MCF 10A (cell line): ENCODE measurements at regions of chr13 and their contacts with region 1.

Region 1: DNA sequence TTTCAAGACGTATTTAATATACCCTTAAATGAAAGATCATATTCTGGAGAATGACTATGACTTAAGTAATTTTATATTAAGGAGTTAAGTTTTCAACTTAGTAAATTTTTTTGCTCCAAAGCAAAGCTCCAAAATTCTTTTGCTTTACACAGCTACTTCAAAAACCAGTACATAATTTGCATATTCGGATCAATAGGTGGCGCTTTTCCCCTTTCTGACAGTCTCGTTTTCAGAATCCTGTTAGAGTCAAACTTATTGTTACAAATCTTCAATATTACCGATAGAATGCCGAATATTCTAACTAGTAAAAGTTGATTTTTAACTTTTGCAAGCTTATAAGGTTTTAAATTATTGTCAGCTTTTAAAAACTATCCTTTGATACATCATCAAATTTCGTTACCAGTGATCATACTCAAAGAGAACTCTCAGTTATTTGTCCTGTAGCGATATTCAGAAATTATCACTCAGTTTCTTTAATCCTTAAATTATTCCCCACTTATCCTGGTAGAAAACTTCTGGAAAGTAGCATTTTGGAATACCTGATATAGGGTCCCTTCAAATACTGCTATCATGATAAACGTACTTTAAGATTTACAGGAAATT is 852.7 kb upstream of the KLHL1 start:
- DNase-seq: peak; percentile 47
- H3K4me3 Mint-ChIP-seq: no peak overlapping the region
- H3K27ac Mint-ChIP-seq: no peak overlapping the region
- H3K4me1 Mint-ChIP-seq: no peaks in the 10 kb centered on the region
- H3K27me3 Mint-ChIP-seq: peaks cover 69% of the 10 kb centered on the region
- CTCF ChIP-seq: peak; percentile 56

Region 2: GRCh38 chr13:70623239-70623638 is 337.7 kb before region 1 on chr13:
- CTCF ChIA-PET with region 1: no interaction called
- POLR2A ChIA-PET with region 1: no interaction called
- intact Hi-C with region 1: loop called (anchors 1 kb)
- DNase-seq: peak; percentile 11
- H3K4me3 Mint-ChIP-seq: no peak overlapping the region
- H3K27ac Mint-ChIP-seq: no peak overlapping the region
- H3K4me1 Mint-ChIP-seq: no peaks in the 10 kb centered on the region
- H3K27me3 Mint-ChIP-seq: peaks cover 37% of the 10 kb centered on the region
- CTCF ChIP-seq: peak; percentile 39

Region 3: DNA sequence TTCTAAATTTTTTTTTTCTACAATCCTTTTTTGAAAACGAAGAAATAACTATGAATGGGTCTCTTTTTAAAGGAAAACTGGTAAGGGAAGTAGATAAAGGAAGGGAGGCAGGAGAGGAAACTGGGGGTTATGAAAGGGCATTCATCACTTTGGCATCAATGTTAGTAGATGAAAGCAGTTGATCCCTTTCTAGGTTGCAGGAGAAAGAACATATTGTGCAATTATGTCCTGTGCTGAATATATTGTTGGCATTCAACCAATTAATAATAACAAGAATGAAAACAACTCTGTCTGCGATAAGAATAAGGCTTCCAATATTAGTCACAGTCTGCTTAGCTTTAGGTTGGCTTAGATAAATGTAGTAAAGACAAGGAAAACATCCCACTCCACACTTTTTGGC is 55.9 kb before region 1 on chr13:
- CTCF ChIA-PET with region 1: no interaction called
- POLR2A ChIA-PET with region 1: no interaction called
- intact Hi-C with region 1: no loop called
- DNase-seq: no peak
- H3K4me3 Mint-ChIP-seq: no peak overlapping the region
- H3K27ac Mint-ChIP-seq: no peak overlapping the region
- H3K4me1 Mint-ChIP-seq: no peaks in the 10 kb centered on the region
- H3K27me3 Mint-ChIP-seq: peaks cover 52% of the 10 kb centered on the region
- CTCF ChIP-seq: no peak

Region 4: DNA sequence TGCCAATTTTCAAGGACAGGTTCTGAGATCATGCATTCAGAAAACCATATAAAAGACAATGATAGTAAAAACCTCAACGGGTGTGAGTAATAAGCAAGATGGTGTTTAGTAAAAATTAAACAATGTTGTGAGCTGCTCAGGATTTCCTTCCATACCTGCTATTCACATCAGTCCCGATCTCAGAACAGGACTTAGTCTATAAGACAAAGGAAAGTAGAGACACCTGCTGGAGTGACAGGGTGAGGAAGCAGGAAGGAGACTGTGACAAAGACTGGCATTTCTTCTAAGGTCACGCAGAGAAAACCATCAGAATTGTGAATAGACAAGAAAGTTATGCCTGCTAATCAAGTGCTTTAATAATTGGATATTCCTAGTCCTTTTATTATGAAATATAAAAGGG is 258.0 kb after region 1 on chr13:
- CTCF ChIA-PET with region 1: no interaction called
- POLR2A ChIA-PET with region 1: no interaction called
- intact Hi-C with region 1: loop called (anchors 2 kb)
- DNase-seq: peak; percentile 18
- H3K4me3 Mint-ChIP-seq: no peak overlapping the region
- H3K27ac Mint-ChIP-seq: no peak overlapping the region
- H3K4me1 Mint-ChIP-seq: no peaks in the 10 kb centered on the region
- H3K27me3 Mint-ChIP-seq: peaks cover 85% of the 10 kb centered on the region
- CTCF ChIP-seq: no peak

Region 5: GRCh38 chr13:72696579-72696978 is 1735.6 kb after region 1 on chr13:
- CTCF ChIA-PET with region 1: interaction called, 7 read pairs
- POLR2A ChIA-PET with region 1: no interaction called
- intact Hi-C with region 1: loop called (anchors 5 kb)
- DNase-seq: peak; percentile 13
- H3K4me3 Mint-ChIP-seq: no peak overlapping the region
- H3K27ac Mint-ChIP-seq: no peak overlapping the region
- H3K4me1 Mint-ChIP-seq: no peaks in the 10 kb centered on the region
- H3K27me3 Mint-ChIP-seq: peaks cover 48% of the 10 kb centered on the region
- CTCF ChIP-seq: peak; percentile 42